ENCODE measurements at regions of chr1 and their contacts with region 1.

Region 1: DNA sequence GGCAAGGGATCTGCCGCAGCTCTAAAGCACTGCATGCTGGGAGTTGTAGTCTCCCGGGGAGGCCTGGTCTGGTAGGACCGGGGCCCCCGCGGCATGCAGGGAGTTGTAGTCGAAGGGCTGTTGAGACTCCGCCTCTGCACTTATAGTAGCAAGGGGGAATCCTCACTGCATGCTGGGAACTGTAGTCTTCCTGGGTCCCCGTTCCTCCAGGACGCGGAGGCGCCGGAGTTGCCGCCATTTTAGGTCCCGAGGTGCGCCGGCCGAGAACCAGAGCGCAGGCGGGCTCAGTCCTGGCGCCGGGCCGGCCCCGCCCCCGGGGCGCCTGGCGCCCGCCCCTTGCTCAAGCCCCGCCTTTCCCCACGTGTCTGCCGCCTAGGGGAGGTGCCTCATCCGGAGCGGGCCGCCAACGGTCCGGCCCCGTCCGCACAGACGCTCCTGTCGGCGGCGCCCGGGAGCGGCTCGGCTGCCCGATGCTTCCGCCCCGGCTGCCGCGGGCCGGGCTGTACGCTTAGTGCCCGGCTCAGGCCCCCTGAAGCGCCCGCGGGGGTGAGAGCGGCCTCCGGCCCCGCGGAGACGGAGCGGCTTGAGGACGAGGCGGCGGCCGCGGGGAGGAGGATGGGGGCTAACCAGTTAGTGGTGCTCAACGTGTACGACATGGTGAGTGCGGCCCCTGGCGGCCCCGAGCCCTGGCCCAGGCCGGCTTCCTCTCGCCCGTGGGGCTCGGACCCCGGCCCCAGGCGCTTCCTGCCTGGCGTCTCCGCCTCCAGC is at the start of gene DESI2:
- DNase-seq: peak; percentile 99 to 100
- H3K4me3 ChIP-seq: peak within 1 kb of the TSS; percentile 72 to 95
- H3K27ac ChIP-seq: peak within 1 kb of the TSS; percentile 93 to 99
- H3K4me1 ChIP-seq: peaks cover 0 to 25% of the 10 kb centered on the region in 2 donors
- H3K27me3 ChIP-seq: no peaks in the 10 kb centered on the region
- CTCF ChIP-seq: peak; percentile 45 to 58 (median 55)
- total RNA-seq, gene DESI2: 24.2 TPM

Region 2: GRCh38 chr1:243255791-243256512 is 1396.9 kb before region 1 on chr1 and contains the start of gene SDCCAG8:
- intact Hi-C with region 1: loop called (anchors 5 kb)
- DNase-seq: peak; percentile 98 to 100
- H3K4me3 ChIP-seq: peak within 1 kb of the TSS; percentile 84 to 99
- H3K27ac ChIP-seq: peak within 1 kb of the TSS; percentile 97 to 99
- H3K4me1 ChIP-seq: peaks cover 3 to 22% of the 10 kb centered on the region in 2 donors
- H3K27me3 ChIP-seq: no peaks in the 10 kb centered on the region
- CTCF ChIP-seq: no peak
- total RNA-seq, gene SDCCAG8: 97.1 TPM

Region 3: DNA sequence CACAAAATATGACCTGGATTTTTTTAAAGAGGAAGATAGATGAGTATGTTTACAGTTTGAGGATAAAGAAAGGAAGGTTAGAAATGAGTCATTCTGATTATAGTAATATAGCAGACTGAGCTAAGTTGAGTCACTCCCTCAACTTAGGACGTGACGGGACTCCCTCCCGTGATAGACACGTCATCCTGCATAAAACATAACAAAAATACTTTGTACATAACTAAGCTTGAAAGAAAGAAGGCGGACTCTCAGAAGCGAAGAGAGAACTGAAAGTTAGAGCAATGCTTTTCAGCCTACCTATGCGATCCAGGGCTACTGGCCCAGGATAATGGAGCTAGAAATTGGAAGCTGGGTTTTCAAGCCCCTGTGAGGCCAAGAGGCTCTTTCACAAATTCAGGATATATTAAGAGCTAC is 52.9 kb before region 1 on chr1:
- intact Hi-C with region 1: loop called (anchors 2 kb)
- DNase-seq: peak; percentile 18 to 76
- H3K4me3 ChIP-seq: peak overlapping the region in 1 of 2 donors; percentile 21
- H3K27ac ChIP-seq: peak overlapping the region in 1 of 2 donors; percentile 45
- H3K4me1 ChIP-seq: no peaks in the 10 kb centered on the region
- H3K27me3 ChIP-seq: no peaks in the 10 kb centered on the region
- CTCF ChIP-seq: no peak

Region 4: GRCh38 chr1:244730153-244730933 is 77.5 kb after region 1 on chr1:
- intact Hi-C with region 1: loop called (anchors 1 kb)
- DNase-seq: no peak
- H3K4me3 ChIP-seq: peak overlapping the region; percentile 55 to 82
- H3K27ac ChIP-seq: no peak overlapping the region
- H3K4me1 ChIP-seq: no peaks in the 10 kb centered on the region
- H3K27me3 ChIP-seq: no peaks in the 10 kb centered on the region
- CTCF ChIP-seq: no peak

Region 5: DNA sequence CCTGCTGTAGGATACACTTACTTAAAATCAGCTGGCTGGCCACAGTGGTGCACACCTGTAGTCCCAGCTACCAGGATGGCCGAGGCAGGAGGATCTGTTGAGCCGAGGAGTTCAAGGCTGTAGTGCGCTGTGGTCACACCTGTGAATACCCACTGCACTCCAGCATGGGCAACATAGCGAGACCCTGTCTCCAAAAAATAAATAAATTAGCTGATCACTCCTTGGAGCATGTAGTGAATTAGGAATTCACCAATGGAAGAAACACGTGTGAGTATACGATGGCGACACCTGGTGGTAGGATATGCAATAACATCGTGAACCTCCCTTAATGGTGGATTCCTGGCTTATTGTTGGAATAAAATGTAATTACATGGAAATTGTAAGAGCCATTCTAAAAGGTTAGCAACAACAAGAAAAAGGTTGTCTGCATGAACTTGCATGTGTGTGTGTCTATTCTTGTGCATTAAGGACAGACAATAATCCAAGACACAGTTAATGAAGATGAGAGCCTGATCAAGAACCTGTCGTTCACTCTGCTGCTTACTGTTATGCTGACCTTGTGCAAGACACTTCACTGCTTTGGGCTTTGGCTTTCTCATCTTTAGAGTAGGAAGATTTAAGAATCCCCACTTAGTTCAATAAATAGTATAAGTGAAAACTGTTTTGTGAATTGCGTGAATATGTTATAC is 144.0 kb after region 1 on chr1:
- intact Hi-C with region 1: loop called (anchors 2 kb)
- DNase-seq: peak in 1 of 2 donors; percentile 74
- H3K4me3 ChIP-seq: no peak overlapping the region
- H3K27ac ChIP-seq: no peak overlapping the region
- H3K4me1 ChIP-seq: no peaks in the 10 kb centered on the region
- H3K27me3 ChIP-seq: no peaks in the 10 kb centered on the region
- CTCF ChIP-seq: peak; percentile 67 to 88 (median 74)

Region 6: DNA sequence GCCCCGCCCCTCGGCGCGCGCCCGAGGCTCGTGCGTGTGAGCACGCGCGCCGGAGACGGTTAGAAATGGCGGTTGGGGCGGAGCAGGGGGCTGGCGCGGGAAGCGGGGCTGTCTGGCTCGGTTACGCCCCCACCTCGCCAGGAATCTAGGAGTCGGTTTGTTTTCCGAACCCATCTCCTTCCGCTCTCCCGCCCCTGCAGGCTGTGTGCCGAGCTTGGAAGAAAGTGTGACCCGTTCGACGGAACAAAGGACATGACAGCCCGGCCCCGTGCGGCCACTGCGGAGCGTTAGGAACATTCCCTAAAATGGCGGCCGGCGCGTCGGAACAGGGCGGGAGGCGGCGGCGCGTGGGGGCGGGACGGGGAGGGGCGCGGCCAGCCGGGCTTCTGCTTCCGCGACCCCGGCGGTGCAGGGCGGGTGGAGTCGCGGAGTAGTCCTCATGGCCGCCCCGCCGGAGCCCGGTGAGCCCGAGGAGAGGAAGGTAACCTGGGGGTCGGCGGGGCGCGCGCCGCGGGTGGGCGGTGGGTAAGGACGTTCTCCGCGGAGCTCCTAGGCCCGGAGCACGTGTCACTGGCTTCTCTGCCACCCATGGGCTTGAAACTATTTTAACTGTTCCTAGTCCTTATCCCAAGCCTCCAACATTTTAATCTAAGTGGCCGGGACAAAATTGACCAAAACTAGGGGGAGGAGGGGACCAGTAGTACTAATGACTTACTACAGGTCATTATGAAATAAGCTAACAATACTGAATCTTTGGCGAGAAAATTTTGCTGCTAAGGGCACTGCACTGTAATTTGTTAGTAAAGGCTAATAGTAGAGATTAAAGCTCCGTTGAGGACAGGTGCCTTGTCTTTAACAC is 182.6 kb after region 1 on chr1 and contains the start of gene COX20:
- intact Hi-C with region 1: loop called (anchors 1 kb)
- DNase-seq: peak; percentile 50 to 93
- H3K4me3 ChIP-seq: peak within 1 kb of the TSS; percentile 67 to 76
- H3K27ac ChIP-seq: peak within 1 kb of the TSS; percentile 98 to 99
- H3K4me1 ChIP-seq: peaks cover 0 to 16% of the 10 kb centered on the region in 2 donors
- H3K27me3 ChIP-seq: no peaks in the 10 kb centered on the region
- CTCF ChIP-seq: no peak
- total RNA-seq, gene COX20: 8.2 TPM

Region 7: DNA sequence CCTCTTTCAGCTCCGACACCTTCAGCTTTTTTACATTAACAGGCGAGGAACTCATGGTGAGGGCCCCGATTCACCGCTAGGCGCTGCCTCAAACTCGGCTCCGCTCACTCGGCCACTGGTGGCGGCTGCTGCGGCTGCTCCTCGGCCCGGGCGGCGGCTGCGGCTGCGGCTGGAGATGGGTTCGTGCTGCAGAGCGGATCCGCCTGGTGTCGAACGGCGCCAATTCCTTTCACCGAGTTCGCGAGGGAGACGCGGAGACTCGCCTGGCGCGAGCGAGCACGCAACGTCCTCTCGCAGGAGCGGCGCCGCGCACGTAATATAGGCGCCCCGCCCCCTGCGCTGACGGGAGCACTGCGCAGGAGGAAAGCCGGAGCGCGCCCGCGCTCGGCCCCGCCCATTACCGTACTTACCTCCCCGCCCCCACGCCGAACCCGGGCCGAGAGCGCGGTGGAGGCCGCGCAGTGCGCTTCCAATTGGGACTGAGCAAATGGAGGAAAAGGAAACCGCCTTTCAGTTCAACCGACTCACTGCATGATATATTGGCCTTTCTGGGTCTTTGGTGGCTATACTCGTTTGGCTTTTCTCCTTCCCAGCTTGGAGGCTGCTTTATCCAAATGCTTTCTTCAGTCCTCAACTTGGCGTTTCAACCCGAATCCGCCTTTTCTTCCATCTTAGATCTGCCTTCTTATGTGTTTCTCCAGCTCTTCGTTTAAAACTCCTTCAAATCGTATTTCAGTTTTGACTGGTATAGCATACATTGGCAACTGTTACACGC is 211.6 kb after region 1 on chr1 and contains the start of gene HNRNPU:
- intact Hi-C with region 1: loop called (anchors 2 kb)
- DNase-seq: peak; percentile 86 to 99
- H3K4me3 ChIP-seq: peak within 1 kb of the TSS; percentile 90 to 100
- H3K27ac ChIP-seq: peak within 1 kb of the TSS; percentile 99 to 100
- H3K4me1 ChIP-seq: peaks cover 11 to 33% of the 10 kb centered on the region in 2 donors
- H3K27me3 ChIP-seq: no peaks in the 10 kb centered on the region
- CTCF ChIP-seq: peak; percentile 18 to 44 (median 41)
- total RNA-seq, gene HNRNPU: 128 TPM